ENCODE measurements at regions of chr3 and their contacts with region 1.

Region 1: GRCh38 chr3:100400780-100401673 is at the starts of genes LNP1 and TOMM70:
- DNase-seq: peak; percentile 91

Region 2: GRCh38 chr3:100334488-100335351 is 66.3 kb before region 1 on chr3 and contains the start of gene NIT2:
- CTCF ChIA-PET with region 1: no interaction called
- POLR2A ChIA-PET with region 1: interaction called, 16 read pairs
- DNase-seq: peak; percentile 93

Region 3: DNA sequence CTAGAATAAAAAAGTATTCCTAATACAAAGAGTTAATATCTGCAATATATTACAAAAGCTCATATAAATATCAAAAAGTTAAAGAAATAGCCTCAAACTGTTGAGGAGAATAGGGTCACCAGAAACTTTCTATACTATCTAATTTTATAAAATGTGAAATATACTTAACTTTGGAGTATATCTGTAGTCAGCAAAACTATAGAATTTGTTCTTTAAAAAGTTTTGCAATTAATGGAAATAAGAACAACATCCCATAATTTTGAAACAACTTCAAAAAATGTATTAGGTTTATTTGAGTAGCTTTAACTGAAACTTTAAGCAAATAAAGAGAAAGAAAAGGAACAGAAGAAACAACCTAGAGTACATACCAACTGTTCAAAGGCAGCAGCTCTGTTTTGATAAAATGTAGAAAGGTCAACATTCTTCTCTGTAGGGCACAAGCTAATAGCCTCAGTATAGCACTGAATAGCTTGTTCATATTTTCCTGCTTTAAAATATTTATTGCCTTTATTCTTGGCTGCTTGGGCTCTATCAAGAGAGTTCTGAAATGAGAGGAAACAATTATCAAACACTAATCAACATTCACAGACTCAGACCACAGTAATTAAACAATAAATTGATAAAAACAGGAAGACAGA is 14.5 kb before region 1 on chr3:
- CTCF ChIA-PET with region 1: interaction called, 4 read pairs
- POLR2A ChIA-PET with region 1: interaction called, 12 read pairs
- DNase-seq: no peak

Region 4: DNA sequence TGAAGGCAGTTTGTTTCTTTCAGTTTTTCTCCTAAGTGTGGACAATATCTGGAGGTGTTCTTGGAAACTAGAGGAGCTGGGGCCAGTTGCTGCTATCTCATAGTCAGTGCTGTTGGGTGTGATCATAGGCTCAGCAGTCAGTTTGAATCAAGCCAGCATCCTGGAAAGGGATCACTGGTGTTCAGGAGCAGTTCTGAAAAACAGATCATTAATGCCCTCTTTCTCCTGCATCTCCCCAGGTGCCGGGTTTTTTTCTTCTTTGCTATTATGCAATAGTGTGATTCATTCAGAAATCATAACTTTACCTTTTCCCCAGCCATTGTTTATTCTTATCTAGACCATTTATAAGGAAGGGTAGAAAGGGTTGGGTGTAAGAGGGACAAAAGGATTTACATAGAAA is 24.3 kb after region 1 on chr3:
- CTCF ChIA-PET with region 1: interaction called, 3 read pairs
- POLR2A ChIA-PET with region 1: interaction called, 12 read pairs
- DNase-seq: no peak

Measured in HEK293T (cell line).